MCF 10A (cell line): ENCODE measurements at regions of chr3 and their contacts with region 1.

Region 1: DNA sequence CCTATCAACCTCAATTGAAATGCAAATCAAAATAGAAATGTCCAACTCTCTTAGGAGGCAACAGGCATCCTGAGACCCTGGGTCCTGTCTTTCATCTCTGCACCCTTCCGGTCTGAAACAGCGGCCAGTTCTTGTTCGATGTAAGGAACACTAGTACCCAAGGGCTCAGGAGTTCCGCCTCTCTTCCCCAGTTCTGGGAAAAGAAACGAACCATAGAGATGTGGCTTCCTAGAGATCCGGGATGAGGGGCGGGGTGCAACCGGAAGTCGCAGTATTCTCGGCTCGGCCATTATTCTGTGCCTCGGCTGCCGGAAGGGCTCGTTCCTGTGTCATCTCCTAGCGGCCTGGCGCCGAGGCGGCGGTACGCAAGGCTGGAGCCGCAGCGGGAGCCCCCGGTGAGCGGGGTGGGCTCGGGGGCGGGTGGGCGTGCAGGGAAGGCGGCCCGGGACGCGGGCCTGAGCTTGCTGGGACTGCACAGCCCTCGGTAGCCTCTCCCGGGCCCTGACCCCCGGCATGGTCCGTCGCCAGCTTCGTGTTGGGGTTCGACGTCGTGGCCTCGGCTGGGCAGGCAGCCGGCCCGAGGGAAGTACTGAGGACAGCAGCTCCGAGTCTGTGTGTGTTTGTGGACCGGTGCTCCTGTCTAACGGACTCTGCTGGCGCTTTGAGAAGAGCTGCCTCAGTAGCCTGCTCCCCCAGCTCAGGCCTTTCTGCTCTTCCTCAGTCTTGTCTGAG is at the start of gene ZNF197:
- DNase-seq: peak; percentile 91
- H3K4me3 Mint-ChIP-seq: peak within 1 kb of the TSS; percentile 85
- H3K27ac Mint-ChIP-seq: peak within 1 kb of the TSS; percentile 80
- H3K4me1 Mint-ChIP-seq: peaks cover 16% of the 10 kb centered on the region
- H3K27me3 Mint-ChIP-seq: no peaks in the 10 kb centered on the region
- CTCF ChIP-seq: no peak
- total RNA-seq, gene ZNF197: 15.6 and 15.8 TPM in 2 replicates

Region 2: DNA sequence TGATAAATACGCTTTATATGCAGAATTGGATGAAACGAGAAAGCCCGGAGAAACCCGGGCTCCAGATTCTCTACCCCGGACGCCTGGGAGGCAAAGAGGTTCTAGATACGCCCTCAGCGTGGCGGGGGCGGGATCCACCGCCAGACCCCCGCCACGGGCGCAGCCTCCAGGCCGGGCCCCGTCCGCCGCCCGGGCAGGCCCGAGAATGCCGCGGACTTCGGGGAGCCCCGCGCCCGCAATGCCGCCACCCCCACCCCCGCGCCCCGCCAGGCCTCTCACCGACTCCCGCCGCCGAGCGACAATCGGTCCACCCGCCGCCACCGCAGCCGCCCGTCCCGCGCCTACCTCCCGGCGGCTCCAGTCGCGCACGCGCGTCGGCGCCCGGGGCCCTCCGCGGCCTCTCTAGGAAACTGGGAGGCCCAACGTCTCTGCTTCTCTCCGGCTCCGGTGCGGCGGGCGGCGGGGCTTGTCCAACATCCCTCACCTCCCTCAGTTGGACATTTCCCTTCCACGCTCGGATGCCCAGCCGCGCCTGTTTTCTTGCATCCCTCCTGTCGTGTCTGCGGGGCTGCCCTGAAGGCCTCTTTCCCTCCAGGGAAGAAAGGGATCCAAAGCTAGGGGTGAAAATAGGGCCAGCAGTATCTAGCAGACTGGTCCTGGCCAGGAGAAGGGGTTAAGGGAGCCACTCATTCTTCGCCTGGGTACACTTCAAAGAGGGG is 147.4 kb before region 1 on chr3 and contains the start of gene ZNF445:
- CTCF ChIA-PET with region 1: no interaction called
- POLR2A ChIA-PET with region 1: interaction called, 4 read pairs
- intact Hi-C with region 1: loop called (anchors 10 kb)
- DNase-seq: peak; percentile 75
- H3K4me3 Mint-ChIP-seq: peak within 1 kb of the TSS; percentile 88
- H3K27ac Mint-ChIP-seq: peak within 1 kb of the TSS; percentile 85
- H3K4me1 Mint-ChIP-seq: peaks cover 19% of the 10 kb centered on the region
- H3K27me3 Mint-ChIP-seq: no peaks in the 10 kb centered on the region
- CTCF ChIP-seq: no peak
- total RNA-seq, gene ZNF445: 10.1 and 11.0 TPM in 2 replicates

Region 3: GRCh38 chr3:44510000-44510368 is 114.9 kb before region 1 on chr3:
- CTCF ChIA-PET with region 1: interaction called, 3 read pairs
- POLR2A ChIA-PET with region 1: interaction called, 24 read pairs
- intact Hi-C with region 1: no loop called
- DNase-seq: peak; percentile 20
- H3K4me3 Mint-ChIP-seq: peak overlapping the region; percentile 94
- H3K27ac Mint-ChIP-seq: peak overlapping the region; percentile 94
- H3K4me1 Mint-ChIP-seq: peaks cover 10% of the 10 kb centered on the region
- H3K27me3 Mint-ChIP-seq: no peaks in the 10 kb centered on the region
- CTCF ChIP-seq: no peak

Region 4: DNA sequence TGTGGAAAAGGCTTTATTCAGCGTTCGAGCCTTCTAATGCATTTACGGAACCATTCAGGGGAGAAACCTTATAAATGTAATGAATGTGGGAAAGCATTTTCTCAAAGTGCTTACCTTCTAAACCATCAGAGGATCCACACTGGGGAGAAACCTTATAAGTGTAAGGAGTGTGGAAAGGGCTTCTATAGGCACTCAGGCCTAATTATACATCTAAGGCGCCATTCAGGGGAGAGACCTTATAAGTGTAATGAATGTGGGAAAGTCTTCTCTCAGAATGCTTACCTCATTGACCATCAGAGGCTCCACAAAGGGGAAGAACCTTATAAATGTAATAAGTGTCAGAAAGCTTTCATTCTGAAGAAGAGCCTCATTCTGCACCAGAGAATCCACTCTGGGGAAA is 17.4 kb after region 1 on chr3:
- CTCF ChIA-PET with region 1: no interaction called
- POLR2A ChIA-PET with region 1: interaction called, 92 read pairs
- intact Hi-C with region 1: no loop called
- DNase-seq: no peak
- H3K4me3 Mint-ChIP-seq: no peak overlapping the region
- H3K27ac Mint-ChIP-seq: no peak overlapping the region
- H3K4me1 Mint-ChIP-seq: no peaks in the 10 kb centered on the region
- H3K27me3 Mint-ChIP-seq: no peaks in the 10 kb centered on the region
- CTCF ChIP-seq: no peak

Region 5: DNA sequence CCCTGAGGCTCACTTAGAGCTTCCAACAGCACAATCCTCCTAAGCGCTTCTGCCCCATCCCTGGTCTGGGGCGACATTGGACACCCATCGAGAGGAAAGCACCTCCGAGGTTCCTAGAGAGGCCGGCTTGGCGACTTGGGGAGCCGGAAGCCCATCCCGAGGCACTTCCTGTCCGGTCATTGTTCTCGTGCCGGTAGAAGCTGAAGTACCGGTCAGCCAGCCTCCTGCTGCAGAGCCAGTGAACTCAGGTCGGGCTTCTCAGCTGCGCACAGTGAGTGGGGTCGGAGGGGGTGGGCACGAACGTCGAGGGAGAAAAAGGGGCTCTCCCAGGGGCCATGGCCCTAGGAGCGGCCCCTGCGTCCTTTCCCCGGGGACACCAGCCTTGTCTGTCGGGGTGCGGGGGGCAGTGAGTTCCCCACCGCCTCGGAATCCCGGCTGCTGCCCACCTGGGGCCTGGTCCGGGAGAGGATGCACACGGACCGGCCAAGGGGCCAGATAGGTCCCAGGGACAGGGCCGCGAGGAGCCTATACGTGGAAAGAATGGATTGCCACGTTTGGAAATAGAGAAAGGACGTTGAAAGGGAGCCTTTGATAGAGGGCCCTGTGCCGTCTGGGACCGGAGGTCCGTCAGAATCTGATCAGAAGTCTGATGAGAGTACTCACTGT is 23.8 kb after region 1 on chr3 and contains the start of gene ZNF35:
- CTCF ChIA-PET with region 1: interaction called, 3 read pairs
- POLR2A ChIA-PET with region 1: interaction called, 92 read pairs
- intact Hi-C with region 1: loop called (anchors 1 kb)
- DNase-seq: peak; percentile 89
- H3K4me3 Mint-ChIP-seq: peak within 1 kb of the TSS; percentile 91
- H3K27ac Mint-ChIP-seq: peak within 1 kb of the TSS; percentile 87
- H3K4me1 Mint-ChIP-seq: peaks cover 10% of the 10 kb centered on the region
- H3K27me3 Mint-ChIP-seq: no peaks in the 10 kb centered on the region
- CTCF ChIP-seq: no peak
- total RNA-seq, gene ZNF35: 9.9 and 12.7 TPM in 2 replicates

Region 6: DNA sequence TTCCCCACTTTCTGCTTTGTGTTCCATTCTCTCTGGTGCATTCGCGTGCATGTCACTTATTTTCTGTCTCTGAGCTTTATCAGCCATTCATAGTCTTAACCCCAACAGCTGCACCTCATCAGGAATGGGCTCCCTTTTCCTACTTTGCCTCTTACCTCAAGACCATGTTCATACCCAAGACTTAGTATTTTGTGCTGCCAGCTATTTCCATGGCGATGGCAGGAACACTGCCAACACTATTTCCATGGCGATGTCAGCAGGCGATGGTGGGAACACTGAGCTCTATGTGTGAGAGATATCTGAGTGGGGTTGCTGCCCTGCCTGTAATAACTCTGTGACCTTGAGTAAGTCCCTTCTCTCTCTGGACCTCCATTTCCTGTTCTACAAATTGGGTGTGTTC is 29.1 kb after region 1 on chr3:
- CTCF ChIA-PET with region 1: interaction called, 4 read pairs
- POLR2A ChIA-PET with region 1: interaction called, 92 read pairs
- intact Hi-C with region 1: no loop called
- DNase-seq: no peak
- H3K4me3 Mint-ChIP-seq: no peak overlapping the region
- H3K27ac Mint-ChIP-seq: no peak overlapping the region
- H3K4me1 Mint-ChIP-seq: peaks cover 9% of the 10 kb centered on the region
- H3K27me3 Mint-ChIP-seq: no peaks in the 10 kb centered on the region
- CTCF ChIP-seq: no peak